ENCODE measurements at regions of chr5 and their contacts with region 1.

Region 1: DNA sequence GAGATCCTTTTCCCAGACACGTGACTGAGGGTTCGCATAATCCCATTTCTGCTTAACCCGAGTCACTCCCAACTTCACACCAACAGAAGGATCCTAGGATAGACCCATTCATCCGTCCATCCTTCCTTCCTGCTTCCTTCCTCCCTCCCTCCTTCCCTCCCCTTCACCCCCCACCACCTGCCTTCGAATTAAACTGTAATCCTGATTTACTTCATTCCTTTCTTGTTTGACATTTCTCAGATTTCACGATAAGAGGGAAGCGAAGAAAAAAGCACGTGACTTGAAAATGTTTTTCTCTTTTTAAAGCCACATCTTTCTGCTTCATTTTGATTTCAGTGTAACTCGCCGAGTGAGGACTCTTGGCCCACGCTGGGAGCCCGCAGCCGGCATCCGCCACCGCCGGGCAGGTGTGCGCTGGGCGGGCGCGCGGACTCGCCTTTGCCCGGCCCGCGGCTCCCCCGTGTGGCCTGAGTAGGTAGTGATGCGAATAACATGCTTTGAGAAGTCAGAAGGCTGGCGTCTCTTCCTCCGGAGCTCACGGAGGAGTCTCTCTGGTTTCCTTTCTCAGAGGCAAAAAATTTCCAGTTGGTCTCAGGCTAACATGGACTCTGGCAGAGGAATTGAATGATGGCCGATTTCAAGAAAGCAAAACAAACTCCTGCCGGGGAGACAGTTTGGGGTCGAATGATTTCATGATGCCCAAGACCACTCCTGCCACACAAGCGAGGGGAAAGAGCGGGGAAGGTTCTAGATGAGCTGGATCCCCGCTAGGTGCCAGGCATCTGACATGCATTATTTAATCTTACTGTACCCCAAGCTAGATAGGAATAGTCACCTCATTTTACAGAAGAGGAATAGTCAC is 117.7 kb downstream of the SLC12A2 start:
- DNase-seq: peak; percentile 73 to 76 (median 74)
- ATAC-seq: peak; percentile 96
- H3K4me3 ChIP-seq: peak overlapping the region; percentile 15; the same call in 1 of the 2 replicates
- H3K27ac ChIP-seq: no peak overlapping the region
- H3K4me1 ChIP-seq: peaks cover 6 to 14% of the 10 kb centered on the region in 2 experiments
- H3K27me3 ChIP-seq: no peaks in the 10 kb centered on the region
- CTCF ChIP-seq: peak; percentile 81 to 86 (median 83)
- EP300 ChIP-seq: no peak
- POLR2A ChIP-seq: no peak
- RAD21 ChIP-seq: peak; percentile 93 to 95

Region 2: DNA sequence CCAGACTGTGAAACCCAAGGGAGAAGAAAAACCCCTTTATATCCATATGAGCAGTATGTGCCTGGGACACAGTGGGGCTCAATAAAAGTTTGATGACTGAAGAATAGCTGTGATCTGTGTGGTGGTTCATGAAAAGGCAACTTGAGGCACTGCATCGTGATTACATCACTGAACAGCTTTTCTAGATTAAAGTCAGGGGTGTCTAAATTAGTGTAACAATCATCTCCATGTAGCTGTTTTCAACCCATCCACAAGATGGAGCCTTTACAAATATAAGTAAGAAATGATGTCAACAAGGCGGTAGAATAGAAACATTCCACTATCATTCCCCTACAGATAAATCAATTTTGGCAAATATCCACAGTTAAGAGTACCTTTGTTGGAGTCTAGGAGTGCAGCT is 628.4 kb before region 1 on chr5:
- CTCF ChIA-PET with region 1: no interaction called
- POLR2A ChIA-PET with region 1: no interaction called
- in situ Hi-C with region 1: loop called (anchors 5 kb)
- intact Hi-C with region 1: no loop called
- DNase-seq: peak in 1 of 4 experiments; percentile 0
- ATAC-seq: no peak
- H3K4me3 ChIP-seq: no peak overlapping the region
- H3K27ac ChIP-seq: no peak overlapping the region
- H3K4me1 ChIP-seq: peaks cover 0 to 3% of the 10 kb centered on the region in 2 experiments; a peak in 1 of 5 replicates
- H3K27me3 ChIP-seq: peaks cover 0 to 5% of the 10 kb centered on the region in 2 experiments; a peak in 1 of 5 replicates
- CTCF ChIP-seq: 0 out of 6 replicates have a peak, but pooled peaks of 1 of the 3 experiments have one; percentile 13
- EP300 ChIP-seq: no peak
- POLR2A ChIP-seq: no peak
- RAD21 ChIP-seq: no peak

Region 3: DNA sequence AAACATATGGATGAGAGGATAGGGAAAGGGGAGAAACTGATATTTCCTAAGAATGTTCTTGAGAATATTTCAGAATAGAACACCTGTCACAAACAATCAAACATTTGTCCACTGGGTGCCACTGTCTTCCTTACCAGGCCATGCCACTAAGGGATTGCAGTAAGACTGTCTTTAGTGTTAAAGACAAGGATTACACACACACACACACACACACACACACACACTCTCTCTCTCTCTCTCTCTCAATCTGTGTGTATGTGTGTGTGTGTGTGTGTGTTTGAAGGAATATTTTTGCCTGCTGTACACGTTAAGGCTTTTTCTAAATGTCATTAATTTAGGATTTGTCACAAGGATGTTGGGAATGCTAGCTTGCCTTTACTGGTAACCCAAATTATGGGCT is 443.7 kb before region 1 on chr5:
- CTCF ChIA-PET with region 1: no interaction called
- POLR2A ChIA-PET with region 1: no interaction called
- in situ Hi-C with region 1: loop called (anchors 10 kb)
- intact Hi-C with region 1: no loop called
- DNase-seq: peak in 3 of 4 experiments; percentile 11 to 21 (median 14)
- ATAC-seq: peak; percentile 74
- H3K4me3 ChIP-seq: no peak overlapping the region
- H3K27ac ChIP-seq: no peak overlapping the region
- H3K4me1 ChIP-seq: no peaks in the 10 kb centered on the region; a peak in 2 of 5 replicates
- H3K27me3 ChIP-seq: peaks cover 0 to 2% of the 10 kb centered on the region in 2 experiments; a peak in 1 of 5 replicates
- CTCF ChIP-seq: peak in 2 of 3 experiments; percentile 47 to 50; a peak in 3 of 6 replicates
- EP300 ChIP-seq: no peak
- POLR2A ChIP-seq: no peak
- RAD21 ChIP-seq: peak; percentile 21 to 38

Region 4: DNA sequence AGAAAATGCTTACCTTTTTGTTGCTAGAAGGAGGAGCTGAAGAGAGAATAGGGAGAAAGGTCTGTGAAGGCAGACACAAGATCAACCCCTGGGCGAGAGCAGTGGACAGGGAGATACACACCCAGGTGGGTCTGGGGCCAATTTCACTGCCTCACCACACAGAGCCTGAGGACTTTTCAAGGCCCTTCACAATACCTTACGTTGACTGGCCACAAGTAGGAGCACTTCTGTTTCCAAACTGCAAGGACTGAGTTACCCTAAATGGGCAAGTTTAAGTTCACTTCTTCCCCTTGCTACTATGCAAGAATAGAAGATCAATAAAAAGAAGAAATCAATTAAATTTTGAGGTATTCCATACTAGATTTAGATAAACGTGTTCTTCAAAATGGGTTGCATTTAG is 292.2 kb before region 1 on chr5:
- CTCF ChIA-PET with region 1: no interaction called
- POLR2A ChIA-PET with region 1: no interaction called
- in situ Hi-C with region 1: no loop called
- intact Hi-C with region 1: loop called (anchors 10 kb)
- DNase-seq: peak; percentile 8 to 48 (median 20)
- ATAC-seq: peak; percentile 97
- H3K4me3 ChIP-seq: no peak overlapping the region
- H3K27ac ChIP-seq: no peak overlapping the region
- H3K4me1 ChIP-seq: no peaks in the 10 kb centered on the region
- H3K27me3 ChIP-seq: peaks cover 0 to 4% of the 10 kb centered on the region in 2 experiments; a peak in 1 of 5 replicates
- CTCF ChIP-seq: peak; percentile 54 to 66 (median 56)
- EP300 ChIP-seq: no peak
- POLR2A ChIP-seq: no peak
- RAD21 ChIP-seq: peak; percentile 36 to 64

Region 5: DNA sequence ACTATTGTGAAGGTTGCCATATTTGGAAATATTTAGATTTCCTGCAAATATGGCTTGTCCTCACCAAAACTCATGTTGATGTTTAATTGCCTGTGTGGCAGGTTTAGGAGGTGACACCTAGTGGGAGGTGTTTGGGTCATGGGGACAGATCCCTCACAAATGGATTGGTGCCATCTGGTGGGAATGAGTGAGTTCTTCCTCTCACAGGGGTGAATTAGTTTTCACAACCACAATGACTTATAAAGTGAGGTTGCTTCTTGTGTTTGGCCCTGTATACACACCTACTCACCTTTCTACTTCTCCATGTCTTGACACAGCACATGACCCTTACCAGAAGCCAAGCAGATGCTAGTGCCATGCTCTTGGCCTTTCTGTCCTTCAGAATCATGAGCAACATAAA is 934.3 kb after region 1 on chr5:
- CTCF ChIA-PET with region 1: no interaction called
- POLR2A ChIA-PET with region 1: no interaction called
- in situ Hi-C with region 1: loop called (anchors 25 kb)
- intact Hi-C with region 1: no loop called
- DNase-seq: peak in 2 of 4 experiments; percentile 16 to 53
- ATAC-seq: peak; percentile 94
- H3K4me3 ChIP-seq: no peak overlapping the region
- H3K27ac ChIP-seq: no peak overlapping the region
- H3K4me1 ChIP-seq: no peaks in the 10 kb centered on the region
- H3K27me3 ChIP-seq: no peaks in the 10 kb centered on the region
- CTCF ChIP-seq: peak; percentile 45 to 60 (median 52); a peak in 5 of 6 replicates
- EP300 ChIP-seq: no peak
- POLR2A ChIP-seq: no peak
- RAD21 ChIP-seq: peak; percentile 66 to 86